ENCODE measurements at regions of chr14 and their contacts with region 1.

Region 1: GRCh38 chr14:96086041-96086440 is 46.9 kb downstream of the C14orf132 start:
- DNase-seq: no peak
- H3K4me3 ChIP-seq: no peak overlapping the region
- H3K27ac ChIP-seq: no peak overlapping the region
- H3K4me1 ChIP-seq: peaks cover 3% of the 10 kb centered on the region
- H3K27me3 ChIP-seq: no peaks in the 10 kb centered on the region
- CTCF ChIP-seq: no peak
- EP300 ChIP-seq: no peak
- POLR2A ChIP-seq: no peak

Region 2: DNA sequence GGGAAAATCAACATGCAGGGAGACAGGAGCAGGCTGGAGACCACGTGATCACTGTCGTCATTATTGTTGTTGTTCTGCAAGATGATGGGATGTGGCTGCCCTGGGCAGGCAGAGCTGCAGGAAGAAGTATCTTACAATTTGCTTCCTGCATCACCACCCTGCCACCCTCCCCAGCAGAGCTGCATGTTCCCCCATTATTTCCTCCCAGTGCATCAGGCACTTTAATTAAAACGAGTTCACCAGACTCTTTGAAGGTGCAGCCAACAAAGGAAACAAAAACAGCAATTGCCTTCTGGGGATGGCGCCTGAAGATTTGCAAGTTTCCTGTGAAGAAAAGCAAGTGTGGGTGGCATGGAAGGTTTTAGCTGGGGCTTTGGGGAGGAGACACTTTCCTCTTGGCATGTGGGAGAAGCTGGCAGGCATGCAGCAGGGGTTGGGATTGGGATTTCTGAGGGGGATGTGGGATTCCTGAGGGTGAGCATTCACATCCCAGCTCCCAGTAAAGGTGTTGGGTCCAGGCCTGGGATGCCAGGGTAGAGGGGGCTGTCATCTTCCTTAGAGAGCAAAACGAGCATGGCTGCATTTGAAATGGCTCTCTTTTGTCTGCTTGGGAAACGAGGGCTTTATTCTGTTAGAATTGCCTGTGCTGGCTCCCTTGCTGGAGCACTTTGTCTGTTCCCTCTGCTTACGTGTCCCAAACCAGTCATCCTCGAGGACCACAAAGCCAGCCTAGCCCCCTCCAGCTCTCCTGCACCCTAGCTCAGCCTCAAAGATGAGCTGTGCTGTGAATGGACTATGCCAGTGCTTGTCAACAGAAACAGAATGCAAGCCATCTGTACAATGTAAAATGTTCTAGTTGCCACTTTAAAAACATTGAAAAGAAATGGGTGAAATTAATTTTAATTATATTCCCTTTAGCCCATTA is 58.3 kb before region 1 on chr14:
- intact Hi-C with region 1: no loop called
- DNase-seq: no peak
- H3K4me3 ChIP-seq: no peak overlapping the region
- H3K27ac ChIP-seq: no peak overlapping the region
- H3K4me1 ChIP-seq: no peaks in the 10 kb centered on the region
- H3K27me3 ChIP-seq: no peaks in the 10 kb centered on the region
- CTCF ChIP-seq: no peak
- EP300 ChIP-seq: no peak
- POLR2A ChIP-seq: no peak

Region 3: GRCh38 chr14:96126339-96126782 is 40.3 kb after region 1 on chr14:
- intact Hi-C with region 1: no loop called
- DNase-seq: no peak
- H3K4me3 ChIP-seq: no peak overlapping the region
- H3K27ac ChIP-seq: no peak overlapping the region
- H3K4me1 ChIP-seq: no peaks in the 10 kb centered on the region
- H3K27me3 ChIP-seq: no peaks in the 10 kb centered on the region
- CTCF ChIP-seq: no peak
- EP300 ChIP-seq: no peak
- POLR2A ChIP-seq: no peak

Region 4: GRCh38 chr14:96409701-96410100 is 323.7 kb after region 1 on chr14:
- intact Hi-C with region 1: loop called in 1 of 4 experiments (anchors 5 kb)
- DNase-seq: no peak
- H3K4me3 ChIP-seq: no peak overlapping the region
- H3K27ac ChIP-seq: no peak overlapping the region
- H3K4me1 ChIP-seq: no peaks in the 10 kb centered on the region
- H3K27me3 ChIP-seq: no peaks in the 10 kb centered on the region
- CTCF ChIP-seq: no peak
- EP300 ChIP-seq: no peak
- POLR2A ChIP-seq: no peak

Measured in ovary (tissue), 10 donors.